GM10248 (cell line): ENCODE measurements at regions of chr11 and their contacts with region 1.

Region 1: GRCh38 chr11:119626871-119627270 is 102.1 kb downstream of the NECTIN1 start:
- DNase-seq: no peak
- CTCF ChIP-seq: no peak

Region 2: DNA sequence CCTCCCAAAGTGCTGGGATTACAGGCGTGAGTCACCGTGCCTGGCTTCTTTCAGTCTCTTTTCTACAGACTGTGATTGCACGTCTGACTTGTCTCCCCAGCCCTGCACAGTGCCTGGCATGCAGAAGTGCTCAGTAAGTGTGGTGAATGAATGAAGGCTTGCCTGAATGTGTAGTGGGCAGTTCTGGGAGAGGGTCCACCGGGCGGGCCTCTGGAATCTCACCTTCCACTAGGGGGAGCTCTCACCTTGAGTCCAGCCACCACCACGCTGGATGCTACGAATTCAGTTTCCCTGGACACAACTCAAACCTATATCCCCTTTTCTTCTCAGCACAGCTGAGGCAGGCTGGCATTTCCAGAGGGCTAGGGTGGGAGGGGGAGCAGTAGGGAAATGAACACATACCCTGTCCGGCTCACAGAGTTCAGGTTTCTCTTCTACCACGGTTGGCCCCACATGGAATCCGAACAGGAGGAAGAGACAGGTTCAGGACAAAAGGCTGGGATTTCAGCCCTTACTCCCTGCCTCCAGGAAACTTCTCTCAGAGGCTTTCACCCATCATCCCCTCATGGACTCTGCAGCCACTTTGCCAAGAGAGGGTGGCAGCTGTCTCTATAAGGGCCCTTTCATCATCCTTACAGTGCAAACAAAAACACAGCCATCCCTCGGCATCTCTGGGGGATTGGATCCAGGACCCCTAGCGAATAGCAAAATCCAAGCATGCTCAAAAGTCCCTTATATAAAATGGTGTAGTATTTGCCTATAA is 15.3 kb after region 1 on chr11:
- CTCF ChIA-PET with region 1: interaction called, 10 read pairs
- POLR2A ChIA-PET with region 1: no interaction called
- DNase-seq: peak; percentile 63
- CTCF ChIP-seq: peak; percentile 43

Region 3: DNA sequence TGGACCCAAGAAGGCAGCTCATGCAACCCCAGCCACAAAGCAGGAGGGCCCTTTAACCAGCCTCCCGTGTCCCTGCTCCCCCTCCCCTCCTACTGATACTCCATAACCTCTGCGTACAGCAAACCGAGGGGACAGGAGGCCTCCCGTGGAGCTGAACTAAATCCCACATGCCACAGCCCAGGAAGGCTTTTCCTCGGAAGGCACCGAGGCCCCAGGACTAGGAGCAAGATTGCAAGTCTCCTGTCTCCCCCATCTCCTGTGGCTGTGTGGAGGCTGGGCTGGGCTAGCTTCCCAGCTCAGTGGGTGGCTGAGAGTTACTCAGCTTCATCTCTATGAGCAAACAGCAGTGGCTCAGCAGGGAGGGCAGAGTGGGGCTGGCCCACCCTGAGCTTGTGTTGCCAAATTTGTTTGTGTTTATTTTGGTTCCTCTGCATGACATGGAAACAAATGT is 164.9 kb after region 1 on chr11:
- CTCF ChIA-PET with region 1: no interaction called
- POLR2A ChIA-PET with region 1: no interaction called
- DNase-seq: no peak
- CTCF ChIP-seq: no peak